Endothelial cell of umbilical vein (primary cell): ENCODE measurements at regions of chr12 and their contacts with region 1.

Region 1: DNA sequence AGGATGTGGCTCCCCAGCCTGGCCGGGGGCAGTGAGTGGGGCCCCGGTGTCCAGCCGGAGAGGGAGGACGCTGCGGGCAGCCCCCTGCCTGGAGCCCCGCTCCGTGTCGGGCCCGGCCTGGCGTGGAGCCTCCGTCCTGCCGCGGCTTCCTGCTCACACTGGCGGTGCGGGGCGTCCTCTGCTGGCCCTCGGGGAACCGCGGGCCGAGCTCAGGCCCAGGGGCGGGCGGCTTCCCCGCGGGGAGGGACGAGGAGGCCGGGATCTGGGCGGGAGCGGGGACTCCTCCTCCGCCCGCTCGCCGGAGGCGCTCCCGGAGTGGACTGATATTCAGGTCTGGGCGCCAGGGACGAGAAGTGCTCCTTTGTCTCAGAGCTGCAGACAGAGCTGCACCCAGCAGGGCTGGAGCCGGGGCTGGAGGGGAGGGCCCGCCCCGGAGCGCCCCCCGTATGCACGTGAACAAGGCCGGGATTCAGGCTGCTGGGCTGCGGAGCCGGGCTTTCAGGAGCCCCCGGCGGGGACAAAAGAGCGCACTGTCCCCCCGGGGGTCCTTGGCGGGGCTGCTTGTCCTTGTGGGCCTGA is 2.2 kb downstream of the MMP17 start:
- DNase-seq: peak; percentile 70
- H3K4me3 ChIP-seq: peak overlapping the region; percentile 30 to 53 (median 35)
- H3K27ac ChIP-seq: no peak overlapping the region
- H3K4me1 ChIP-seq: peaks cover 12% of the 10 kb centered on the region
- H3K27me3 ChIP-seq: peaks cover 0 to 6% of the 10 kb centered on the region in 2 experiments
- CTCF ChIP-seq: peak; percentile 62 to 74
- POLR2A ChIP-seq: no peak

Region 2: GRCh38 chr12:130871286-130872178 is 958.9 kb before region 1 on chr12 and contains the start of gene RAN:
- CTCF ChIA-PET with region 1: no interaction called
- POLR2A ChIA-PET with region 1: no interaction called
- dilution Hi-C with region 1: no loop called
- intact Hi-C with region 1: loop called (anchors 5 kb)
- DNase-seq: peak; percentile 89
- H3K4me3 ChIP-seq: peak within 1 kb of the TSS; percentile 69 to 99 (median 96)
- H3K27ac ChIP-seq: peak within 1 kb of the TSS; percentile 70
- H3K4me1 ChIP-seq: peaks cover 23% of the 10 kb centered on the region
- H3K27me3 ChIP-seq: no peaks in the 10 kb centered on the region
- CTCF ChIP-seq: no peak
- POLR2A ChIP-seq: peak; percentile 89
- total RNA-seq, gene RAN: 1,205 and 1,212 TPM in 2 replicates

Region 3: GRCh38 chr12:131608740-131609690 is 221.4 kb before region 1 on chr12:
- CTCF ChIA-PET with region 1: no interaction called
- POLR2A ChIA-PET with region 1: no interaction called
- dilution Hi-C with region 1: no loop called
- intact Hi-C with region 1: loop called (anchors 1 kb)
- DNase-seq: peak; percentile 14
- H3K4me3 ChIP-seq: no peak overlapping the region
- H3K27ac ChIP-seq: no peak overlapping the region
- H3K4me1 ChIP-seq: no peaks in the 10 kb centered on the region
- H3K27me3 ChIP-seq: no peaks in the 10 kb centered on the region
- CTCF ChIP-seq: peak; percentile 56 to 69
- POLR2A ChIP-seq: no peak

Region 4: DNA sequence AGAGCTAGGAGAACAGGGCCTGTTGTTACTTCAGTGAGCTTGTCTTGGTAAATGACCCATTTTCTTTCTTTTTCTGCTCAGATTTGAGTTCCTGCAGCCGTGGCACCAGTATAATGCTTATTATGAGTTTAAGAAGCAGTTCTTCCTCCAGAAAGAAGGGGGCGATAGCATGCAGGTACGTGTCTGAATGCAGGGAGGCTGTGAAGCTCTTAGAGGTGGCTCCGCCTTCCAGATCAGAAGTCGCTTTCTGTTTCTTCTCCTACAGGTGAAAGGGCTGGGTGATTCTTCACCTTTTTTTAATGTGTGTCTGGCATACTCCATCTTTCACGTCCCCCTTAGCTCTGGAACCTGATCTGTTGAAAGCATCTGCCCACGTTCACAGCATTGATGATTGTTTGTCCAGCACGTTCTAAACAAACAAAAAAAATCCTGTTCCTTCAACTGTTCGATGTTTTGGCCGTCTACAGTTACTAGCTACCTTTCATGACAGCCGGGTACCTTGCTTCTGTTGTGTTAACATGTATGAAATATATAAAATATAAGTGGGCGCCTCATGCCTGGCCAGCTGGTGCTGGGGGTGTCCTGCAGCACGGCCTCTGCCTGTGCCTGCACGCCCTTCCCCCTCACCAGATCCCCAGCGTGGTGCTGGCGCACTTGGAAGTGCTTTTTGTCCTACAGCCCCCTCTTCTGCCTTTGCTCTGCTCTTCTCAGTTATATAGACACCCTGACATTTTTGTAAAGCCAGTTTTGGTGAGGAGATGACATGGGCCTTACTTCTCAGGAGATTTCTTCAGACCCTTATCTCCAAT is 74.9 kb before region 1 on chr12:
- CTCF ChIA-PET with region 1: interaction called, 7 read pairs
- POLR2A ChIA-PET with region 1: no interaction called
- dilution Hi-C with region 1: no loop called
- intact Hi-C with region 1: loop called (anchors 2 kb)
- DNase-seq: no peak
- H3K4me3 ChIP-seq: no peak overlapping the region
- H3K27ac ChIP-seq: no peak overlapping the region
- H3K4me1 ChIP-seq: no peaks in the 10 kb centered on the region
- H3K27me3 ChIP-seq: no peaks in the 10 kb centered on the region
- CTCF ChIP-seq: peak; percentile 16 to 27
- POLR2A ChIP-seq: no peak

Region 5: GRCh38 chr12:131894313-131894860 is 64.0 kb after region 1 on chr12 and contains the start of gene ULK1:
- CTCF ChIA-PET with region 1: no interaction called
- POLR2A ChIA-PET with region 1: no interaction called
- dilution Hi-C with region 1: no loop called
- intact Hi-C with region 1: loop called (anchors 2 kb)
- DNase-seq: peak; percentile 79
- H3K4me3 ChIP-seq: peak within 1 kb of the TSS; percentile 37 to 56 (median 52)
- H3K27ac ChIP-seq: peak within 1 kb of the TSS; percentile 60
- H3K4me1 ChIP-seq: peaks cover 9% of the 10 kb centered on the region
- H3K27me3 ChIP-seq: peaks cover 0 to 3% of the 10 kb centered on the region in 2 experiments
- CTCF ChIP-seq: no peak
- POLR2A ChIP-seq: peak; percentile 92
- total RNA-seq, gene ULK1: 37.8 and 38.2 TPM in 2 replicates